Activated CD4-positive, alpha-beta T cell treated with anti-CD3 and anti-CD28 coated beads, Interleukin-2, amount 10 ng/mL, durations not matched to agents 24 days and 14 days (primary cell): ENCODE measurements at regions of chr2 and their contacts with region 1.

Region 1: DNA sequence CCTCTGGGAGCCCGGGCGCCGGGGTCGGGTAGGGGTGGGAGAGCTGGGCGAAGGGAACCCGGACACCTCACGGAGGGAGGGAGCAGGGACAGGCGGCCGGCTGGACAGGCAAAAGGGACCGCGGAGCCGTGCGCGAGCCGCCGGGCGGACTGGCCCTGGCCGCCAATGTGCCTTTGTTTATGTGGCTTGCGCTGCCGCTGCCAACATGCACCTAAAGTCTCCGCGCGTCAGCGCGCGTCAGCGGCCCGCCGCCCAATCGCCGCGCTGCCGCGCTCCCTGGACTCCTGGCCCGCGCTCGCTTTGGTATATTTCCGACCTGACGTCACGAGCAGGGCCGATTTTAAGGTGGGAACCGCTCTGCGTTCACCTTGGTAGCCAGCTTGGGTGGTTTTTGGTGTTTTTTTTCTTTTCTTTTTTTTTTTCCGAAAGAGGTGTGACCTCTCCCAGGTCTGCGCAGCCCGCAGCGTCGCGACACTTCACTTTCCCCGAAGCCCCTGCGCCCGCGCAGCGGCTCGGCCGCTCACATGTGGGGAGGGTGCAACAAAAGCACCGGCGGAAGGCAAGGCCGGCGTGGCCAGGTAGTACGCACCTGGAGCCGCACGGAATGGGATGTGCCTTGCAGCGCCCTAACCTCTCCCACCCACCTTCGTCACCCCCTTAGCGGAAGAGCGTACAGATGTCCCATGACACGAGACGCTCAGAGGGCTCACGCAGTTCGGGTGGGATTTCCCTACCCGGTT is at the start of gene NR4A2:
- DNase-seq: peak; percentile 96
- H3K4me3 Mint-ChIP-seq: peak within 1 kb of the TSS; percentile 81
- H3K27ac Mint-ChIP-seq: peak within 1 kb of the TSS; percentile 99
- H3K4me1 Mint-ChIP-seq: peaks cover 50% of the 10 kb centered on the region
- H3K27me3 Mint-ChIP-seq: peaks cover 7% of the 10 kb centered on the region
- total RNA-seq, gene NR4A2: 13.2 and 14.1 TPM in 2 replicates

Region 2: DNA sequence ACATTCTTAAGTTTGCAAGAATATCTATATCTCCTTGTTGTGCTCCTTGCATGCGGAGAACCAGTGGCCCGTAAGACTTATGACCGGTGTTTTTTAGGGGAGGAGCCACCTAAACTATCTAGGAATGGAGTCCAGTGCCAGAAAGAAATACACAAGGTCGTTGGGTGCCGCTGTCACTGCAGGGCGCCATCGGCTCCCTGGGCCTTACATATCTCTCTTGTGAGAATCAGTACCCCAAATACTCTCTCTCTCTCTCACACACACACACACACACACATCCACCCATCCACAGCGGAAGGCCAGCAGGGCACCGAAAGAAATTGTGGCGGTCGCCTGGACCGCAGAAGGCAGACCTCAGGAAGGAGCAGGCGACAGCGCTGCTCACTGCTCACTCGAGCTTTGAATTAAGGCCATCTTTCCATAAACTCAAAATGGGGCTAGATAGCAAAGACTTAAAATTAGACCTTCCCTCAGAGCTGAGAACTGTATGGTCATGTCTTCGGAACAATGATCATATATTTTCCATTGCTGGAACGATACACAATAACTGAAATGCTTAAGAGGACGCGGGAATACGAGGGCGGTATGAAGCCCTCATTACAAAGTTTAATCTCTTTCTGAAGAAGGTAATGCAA is 10.5 kb before region 1 on chr2:
- intact Hi-C with region 1: loop called (anchors 1 kb)
- DNase-seq: peak; percentile 72
- H3K4me3 Mint-ChIP-seq: peak overlapping the region; percentile 74
- H3K27ac Mint-ChIP-seq: peak overlapping the region; percentile 43
- H3K4me1 Mint-ChIP-seq: peaks cover 20% of the 10 kb centered on the region
- H3K27me3 Mint-ChIP-seq: peaks cover 70% of the 10 kb centered on the region

Region 3: GRCh38 chr2:156385242-156385641 is 52.5 kb after region 1 on chr2:
- intact Hi-C with region 1: loop called (anchors 1 kb)
- DNase-seq: no peak
- H3K4me3 Mint-ChIP-seq: peak overlapping the region; percentile 3
- H3K27ac Mint-ChIP-seq: peak overlapping the region; percentile 78
- H3K4me1 Mint-ChIP-seq: peaks cover 37% of the 10 kb centered on the region
- H3K27me3 Mint-ChIP-seq: no peaks in the 10 kb centered on the region

Region 4: DNA sequence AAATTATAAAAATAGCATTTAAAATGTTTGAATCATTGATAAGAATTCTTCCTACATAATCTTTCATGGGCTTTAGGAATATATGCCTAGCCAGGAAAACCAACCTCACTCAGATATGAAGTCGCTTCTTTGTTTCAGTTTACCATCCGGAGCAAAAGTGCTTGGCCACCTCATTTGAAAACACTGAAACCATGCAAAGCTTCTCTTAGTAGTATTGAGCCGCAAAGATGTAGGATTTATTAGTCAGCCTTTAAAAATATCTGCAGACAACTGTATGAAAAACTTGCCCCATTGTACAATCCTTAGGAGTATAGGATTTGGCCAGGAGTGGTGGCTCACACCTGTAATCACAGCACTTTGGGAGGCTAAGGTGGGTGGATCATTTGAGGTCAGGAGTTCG is 79.1 kb after region 1 on chr2:
- intact Hi-C with region 1: no loop called
- DNase-seq: no peak
- H3K4me3 Mint-ChIP-seq: no peak overlapping the region
- H3K27ac Mint-ChIP-seq: no peak overlapping the region
- H3K4me1 Mint-ChIP-seq: no peaks in the 10 kb centered on the region
- H3K27me3 Mint-ChIP-seq: peaks cover 19% of the 10 kb centered on the region

Region 5: DNA sequence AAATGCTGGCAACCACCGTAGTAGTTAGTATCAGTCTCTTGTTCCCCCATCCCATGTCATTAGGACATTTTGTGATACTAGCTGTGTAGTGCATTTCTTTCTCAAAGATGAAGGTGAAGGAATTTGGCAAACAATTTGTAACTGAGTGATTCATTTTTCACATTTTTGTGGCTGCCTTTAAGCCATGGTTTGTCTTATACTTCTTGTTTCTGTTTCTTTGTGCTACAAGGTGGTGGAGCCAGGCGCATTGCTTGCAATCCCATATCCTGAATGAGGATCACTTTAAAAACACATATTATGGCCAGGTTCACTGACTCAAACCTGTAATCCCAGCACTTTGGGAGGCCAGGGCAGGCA is 144.1 kb after region 1 on chr2:
- intact Hi-C with region 1: loop called (anchors 1 kb)
- DNase-seq: peak; percentile 64
- H3K4me3 Mint-ChIP-seq: peak overlapping the region; percentile 57
- H3K27ac Mint-ChIP-seq: peak overlapping the region; percentile 76
- H3K4me1 Mint-ChIP-seq: peaks cover 46% of the 10 kb centered on the region
- H3K27me3 Mint-ChIP-seq: no peaks in the 10 kb centered on the region

Region 6: GRCh38 chr2:156589381-156590079 is 256.8 kb after region 1 on chr2:
- intact Hi-C with region 1: loop called (anchors 1 kb)
- DNase-seq: peak; percentile 64
- H3K4me3 Mint-ChIP-seq: no peak overlapping the region
- H3K27ac Mint-ChIP-seq: no peak overlapping the region
- H3K4me1 Mint-ChIP-seq: peaks cover 8% of the 10 kb centered on the region
- H3K27me3 Mint-ChIP-seq: no peaks in the 10 kb centered on the region

Region 7: GRCh38 chr2:156892467-156893281 is 560.0 kb after region 1 on chr2:
- intact Hi-C with region 1: loop called (anchors 1 kb)
- DNase-seq: peak; percentile 66
- H3K4me3 Mint-ChIP-seq: peak overlapping the region; percentile 25
- H3K27ac Mint-ChIP-seq: no peak overlapping the region
- H3K4me1 Mint-ChIP-seq: peaks cover 33% of the 10 kb centered on the region
- H3K27me3 Mint-ChIP-seq: peaks cover 52% of the 10 kb centered on the region

Region 8: GRCh38 chr2:157480182-157480961 is 1147.7 kb after region 1 on chr2:
- intact Hi-C with region 1: loop called (anchors 1 kb)
- DNase-seq: peak; percentile 88
- H3K4me3 Mint-ChIP-seq: peak overlapping the region; percentile 84
- H3K27ac Mint-ChIP-seq: peak overlapping the region; percentile 96
- H3K4me1 Mint-ChIP-seq: peaks cover 77% of the 10 kb centered on the region
- H3K27me3 Mint-ChIP-seq: no peaks in the 10 kb centered on the region